Mammary epithelial cell (primary cell): ENCODE measurements at regions of chr2 and their contacts with region 1.

Region 1: DNA sequence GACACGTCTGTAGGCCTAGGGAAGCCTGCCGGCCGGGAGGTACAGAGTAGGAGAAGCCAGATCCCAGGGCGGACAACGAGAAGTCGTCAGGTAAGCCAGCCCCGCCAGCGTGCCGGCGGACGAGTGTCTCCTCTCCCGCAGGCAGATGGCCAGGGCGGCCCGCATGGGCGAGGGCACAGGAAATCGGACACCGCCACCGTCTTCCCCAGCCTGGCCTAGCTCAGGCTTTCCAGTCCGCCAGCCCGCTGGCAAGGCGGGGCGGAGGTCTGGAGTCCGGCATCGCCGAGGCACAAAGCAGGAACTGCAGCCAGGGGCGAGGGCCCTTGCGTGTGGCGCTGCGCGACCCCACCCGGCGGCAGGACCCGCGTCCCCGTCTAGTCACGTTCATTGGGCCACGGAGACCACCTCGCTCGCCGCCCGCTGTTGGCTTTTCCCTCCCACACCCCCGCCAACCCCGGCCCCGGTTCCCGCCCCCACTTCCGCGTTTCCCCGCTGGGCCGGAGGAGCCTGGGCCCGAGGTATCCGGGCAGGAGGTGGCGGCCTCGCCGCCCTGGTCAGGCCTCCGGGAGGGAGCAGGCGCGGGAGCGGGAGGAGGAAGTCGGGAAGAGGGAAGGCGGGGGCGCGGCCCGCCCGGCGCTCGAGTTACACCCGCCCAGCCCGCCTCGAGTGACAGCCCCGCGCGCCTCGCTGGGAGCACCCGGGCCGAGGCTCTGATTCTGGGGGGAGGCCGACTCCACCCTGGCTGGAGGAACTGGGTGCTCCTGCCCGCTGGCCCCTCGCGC is at the start of gene GPD2:
- DNase-seq: peak; percentile 61
- H3K4me3 ChIP-seq: peak within 1 kb of the TSS; percentile 63 to 85 (median 65)
- H3K27ac ChIP-seq: peak within 1 kb of the TSS; percentile 90
- H3K4me1 ChIP-seq: peaks cover 39% of the 10 kb centered on the region
- H3K27me3 ChIP-seq: no peaks in the 10 kb centered on the region
- CTCF ChIP-seq: no peak
- total RNA-seq, gene GPD2: 30.0 to 39.3 TPM

Region 2: DNA sequence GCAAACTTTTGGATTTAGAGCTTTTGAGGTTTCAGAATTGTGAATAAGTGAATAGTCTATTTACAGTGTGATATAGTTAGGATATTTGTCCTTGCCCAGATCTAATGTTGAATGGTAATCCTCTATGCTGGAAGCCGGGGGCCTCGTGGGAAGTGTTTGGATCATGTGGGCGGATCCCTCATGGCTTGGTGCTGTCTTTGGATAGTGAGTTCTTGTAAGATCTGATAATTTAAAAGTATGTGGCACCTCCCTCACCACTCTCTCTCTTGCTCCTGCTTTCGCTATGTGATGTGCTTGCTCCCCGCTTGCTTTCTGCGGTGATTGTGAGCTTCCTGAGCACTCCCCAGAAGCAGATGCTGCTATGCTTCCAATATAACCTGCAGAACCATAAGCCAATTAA is 1865.4 kb before region 1 on chr2:
- CTCF ChIA-PET with region 1: no interaction called
- dilution Hi-C with region 1: no loop called
- in situ Hi-C with region 1: no loop called
- intact Hi-C with region 1: no loop called
- DNase-seq: no peak
- H3K4me3 ChIP-seq: no peak overlapping the region
- H3K27ac ChIP-seq: no peak overlapping the region
- H3K4me1 ChIP-seq: no peaks in the 10 kb centered on the region
- H3K27me3 ChIP-seq: no peaks in the 10 kb centered on the region
- CTCF ChIP-seq: no peak

Region 3: DNA sequence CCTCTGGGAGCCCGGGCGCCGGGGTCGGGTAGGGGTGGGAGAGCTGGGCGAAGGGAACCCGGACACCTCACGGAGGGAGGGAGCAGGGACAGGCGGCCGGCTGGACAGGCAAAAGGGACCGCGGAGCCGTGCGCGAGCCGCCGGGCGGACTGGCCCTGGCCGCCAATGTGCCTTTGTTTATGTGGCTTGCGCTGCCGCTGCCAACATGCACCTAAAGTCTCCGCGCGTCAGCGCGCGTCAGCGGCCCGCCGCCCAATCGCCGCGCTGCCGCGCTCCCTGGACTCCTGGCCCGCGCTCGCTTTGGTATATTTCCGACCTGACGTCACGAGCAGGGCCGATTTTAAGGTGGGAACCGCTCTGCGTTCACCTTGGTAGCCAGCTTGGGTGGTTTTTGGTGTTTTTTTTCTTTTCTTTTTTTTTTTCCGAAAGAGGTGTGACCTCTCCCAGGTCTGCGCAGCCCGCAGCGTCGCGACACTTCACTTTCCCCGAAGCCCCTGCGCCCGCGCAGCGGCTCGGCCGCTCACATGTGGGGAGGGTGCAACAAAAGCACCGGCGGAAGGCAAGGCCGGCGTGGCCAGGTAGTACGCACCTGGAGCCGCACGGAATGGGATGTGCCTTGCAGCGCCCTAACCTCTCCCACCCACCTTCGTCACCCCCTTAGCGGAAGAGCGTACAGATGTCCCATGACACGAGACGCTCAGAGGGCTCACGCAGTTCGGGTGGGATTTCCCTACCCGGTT is 103.2 kb before region 1 on chr2 and contains the start of gene NR4A2:
- CTCF ChIA-PET with region 1: no interaction called
- dilution Hi-C with region 1: no loop called
- in situ Hi-C with region 1: loop called in 1 of 2 experiments (anchors 25 kb)
- intact Hi-C with region 1: loop called (anchors 2 kb)
- DNase-seq: peak; percentile 92
- H3K4me3 ChIP-seq: peak within 1 kb of the TSS; percentile 66 to 86 (median 80)
- H3K27ac ChIP-seq: peak within 1 kb of the TSS; percentile 95
- H3K4me1 ChIP-seq: peaks cover 23% of the 10 kb centered on the region
- H3K27me3 ChIP-seq: no peaks in the 10 kb centered on the region
- CTCF ChIP-seq: no peak
- total RNA-seq, gene NR4A2: 0.50 to 1.3 TPM

Region 4: GRCh38 chr2:156341452-156342253 is 94.3 kb before region 1 on chr2:
- CTCF ChIA-PET with region 1: no interaction called
- dilution Hi-C with region 1: no loop called
- in situ Hi-C with region 1: loop called in 1 of 2 experiments (anchors 25 kb)
- intact Hi-C with region 1: no loop called
- DNase-seq: peak; percentile 94
- H3K4me3 ChIP-seq: peak overlapping the region; percentile 73 to 97 (median 96)
- H3K27ac ChIP-seq: peak overlapping the region; percentile 97
- H3K4me1 ChIP-seq: peaks cover 24% of the 10 kb centered on the region
- H3K27me3 ChIP-seq: no peaks in the 10 kb centered on the region
- CTCF ChIP-seq: no peak

Region 5: GRCh38 chr2:156476850-156477206 is 40.9 kb after region 1 on chr2:
- CTCF ChIA-PET with region 1: no interaction called
- dilution Hi-C with region 1: no loop called
- in situ Hi-C with region 1: no loop called
- intact Hi-C with region 1: loop called (anchors 5 kb)
- DNase-seq: peak; percentile 66
- H3K4me3 ChIP-seq: no peak overlapping the region
- H3K27ac ChIP-seq: peak overlapping the region; percentile 54
- H3K4me1 ChIP-seq: peaks cover 17% of the 10 kb centered on the region
- H3K27me3 ChIP-seq: no peaks in the 10 kb centered on the region
- CTCF ChIP-seq: no peak

Region 6: GRCh38 chr2:157245846-157246764 is 810.2 kb after region 1 on chr2:
- CTCF ChIA-PET with region 1: no interaction called
- dilution Hi-C with region 1: loop called (anchors 25 kb)
- in situ Hi-C with region 1: no loop called
- intact Hi-C with region 1: no loop called
- DNase-seq: peak; percentile 97
- H3K4me3 ChIP-seq: no peak overlapping the region
- H3K27ac ChIP-seq: peak overlapping the region; percentile 100
- H3K4me1 ChIP-seq: peaks cover 28% of the 10 kb centered on the region
- H3K27me3 ChIP-seq: no peaks in the 10 kb centered on the region
- CTCF ChIP-seq: no peak